ENCODE measurements at regions of chr14 and their contacts with region 1.

Region 1: GRCh38 chr14:67426983-67427606 is 15.1 kb upstream of the PLEK2 start:
- DNase-seq: no peak
- ATAC-seq: peak; percentile 87

Region 2: GRCh38 chr14:67487937-67488893 is 61.1 kb after region 1 on chr14 and contains the start of gene TMEM229B:
- intact Hi-C with region 1: loop called (anchors 2 kb)
- DNase-seq: peak; percentile 70
- ATAC-seq: no peak
- total RNA-seq, gene TMEM229B: 4.2 TPM

Region 3: GRCh38 chr14:67514650-67515385 is 87.7 kb after region 1 on chr14:
- intact Hi-C with region 1: loop called (anchors 5 kb)
- DNase-seq: peak; percentile 67
- ATAC-seq: peak; percentile 43

Region 4: DNA sequence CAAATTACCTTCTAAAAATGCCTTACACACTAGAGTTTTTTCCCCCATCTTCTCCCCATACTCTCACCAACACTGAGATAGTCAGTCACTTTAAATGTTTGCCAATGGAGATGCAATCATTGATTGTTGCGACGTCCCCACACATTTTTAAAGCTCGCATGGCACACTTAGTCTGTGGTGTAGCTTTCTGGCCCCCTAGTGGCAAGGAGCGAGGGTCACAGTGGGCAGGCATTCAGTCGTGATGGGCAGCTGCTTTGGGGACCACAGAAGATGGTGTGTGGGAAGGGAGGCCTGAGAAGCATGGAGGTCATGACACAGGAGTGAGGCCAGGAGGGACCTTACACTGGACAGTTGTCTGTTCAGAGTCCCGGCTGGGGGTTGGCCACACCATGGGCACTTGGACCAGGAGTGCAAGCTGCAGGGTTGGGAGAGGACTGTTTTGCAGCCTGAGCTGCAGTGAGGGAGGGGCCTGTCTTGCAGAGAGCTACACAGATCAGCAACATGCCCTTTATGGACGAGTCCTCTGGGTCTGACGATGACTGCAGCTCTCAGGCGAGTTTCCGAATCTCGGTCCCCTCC is 144.3 kb after region 1 on chr14:
- intact Hi-C with region 1: loop called (anchors 1 kb)
- DNase-seq: no peak
- ATAC-seq: peak; percentile 68

Region 5: DNA sequence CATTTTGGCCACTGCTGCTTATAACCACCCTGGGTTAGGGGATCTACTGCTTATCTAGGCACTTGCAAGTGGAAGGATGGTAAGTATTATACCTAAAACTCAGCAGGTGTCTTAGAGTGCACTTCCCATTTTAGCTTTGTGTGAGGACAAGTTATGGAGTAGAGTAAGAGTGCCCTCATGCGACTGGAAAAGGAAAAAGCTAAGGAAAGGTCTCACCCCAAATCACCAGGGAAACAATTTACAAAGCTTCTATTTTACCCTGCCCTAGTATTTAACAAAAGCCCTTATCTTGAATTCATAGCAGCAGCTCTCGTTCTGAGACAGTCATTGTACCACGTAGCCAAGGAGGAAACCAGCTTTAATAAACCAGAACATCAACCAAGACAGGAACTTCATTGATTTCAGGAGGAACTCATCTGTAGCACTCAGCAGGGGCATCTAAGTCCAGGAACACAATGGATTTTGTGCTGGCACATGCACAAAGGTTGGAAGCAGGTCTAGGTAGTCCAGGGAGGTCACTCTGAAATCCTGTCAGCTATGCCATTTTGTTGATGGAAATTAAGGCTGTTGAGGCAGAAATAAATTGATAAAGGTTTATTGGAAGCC is 277.5 kb after region 1 on chr14:
- intact Hi-C with region 1: loop called (anchors 10 kb)
- DNase-seq: no peak
- ATAC-seq: peak; percentile 54

Region 6: DNA sequence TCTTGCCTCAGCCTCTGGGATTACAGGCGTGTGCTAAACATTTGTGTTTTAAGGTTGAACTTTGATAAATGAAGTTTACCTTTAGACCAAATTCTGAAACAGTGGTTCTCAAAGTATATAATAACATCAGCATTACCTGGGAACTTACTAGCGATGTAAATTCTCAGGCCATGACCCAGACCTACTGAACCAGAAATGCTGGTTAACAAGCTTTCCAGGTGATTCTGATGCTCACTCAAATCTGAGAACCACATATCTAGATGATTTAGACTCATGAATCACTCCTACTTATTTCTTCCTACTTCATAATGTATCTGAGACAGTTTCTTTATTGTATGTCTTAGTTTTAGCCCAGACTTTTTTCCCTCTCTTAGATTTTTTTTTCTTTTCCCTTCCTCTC is 436.1 kb after region 1 on chr14:
- intact Hi-C with region 1: no loop called
- DNase-seq: no peak
- ATAC-seq: no peak

Measured in Right ventricle myocardium inferior (tissue), 1 donor.